Pancreas (tissue), 10 donors: ENCODE measurements at regions of chr17 and their contacts with region 1.

Region 1: DNA sequence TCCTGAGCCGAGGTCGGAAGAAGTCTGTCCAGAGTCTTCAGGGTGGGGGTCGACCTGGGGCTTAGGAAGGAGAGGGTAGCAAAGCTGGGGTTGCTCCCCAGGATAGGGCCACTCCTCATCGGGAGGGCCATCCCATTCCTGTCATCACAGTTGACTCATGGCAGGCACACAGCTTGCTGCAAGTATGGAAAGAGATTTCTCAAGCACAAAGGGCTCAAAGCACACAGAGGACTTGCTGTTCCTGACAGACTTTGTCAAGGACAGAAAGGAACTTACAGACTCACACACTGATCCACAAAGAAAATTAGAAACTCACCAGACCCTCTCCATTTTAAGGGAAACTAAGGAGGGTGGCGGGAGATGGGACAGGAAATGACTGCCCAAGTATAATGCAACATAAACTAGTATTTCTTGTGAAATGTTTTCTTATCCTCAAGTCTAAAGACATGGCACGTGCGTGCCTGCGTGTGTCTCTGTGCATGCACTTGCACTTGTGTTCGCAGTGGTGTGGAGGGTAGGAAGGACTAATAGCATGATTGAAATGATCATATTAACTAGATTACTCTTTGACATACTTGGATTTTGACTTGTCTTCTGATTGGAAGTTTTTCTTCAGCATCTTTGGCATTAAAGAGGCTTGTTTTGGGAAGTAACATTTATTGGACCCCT is 2.4 kb downstream of the AOC2 start:
- DNase-seq: no peak
- ATAC-seq: peak in 2 of 4 donors; percentile 8 to 15
- H3K4me3 ChIP-seq: no peak overlapping the region
- H3K27ac ChIP-seq: no peak overlapping the region
- H3K4me1 ChIP-seq: no peaks in the 10 kb centered on the region
- H3K27me3 ChIP-seq: no peaks in the 10 kb centered on the region
- CTCF ChIP-seq: no peak

Region 2: GRCh38 chr17:42928714-42929496 is 82.2 kb after region 1 on chr17:
- intact Hi-C with region 1: loop called in 1 of 3 experiments (anchors 5 kb)
- DNase-seq: peak in 4 of 6 donors; percentile 36 to 70 (median 58)
- ATAC-seq: peak; percentile 97 to 98 (median 98)
- H3K4me3 ChIP-seq: no peak overlapping the region
- H3K27ac ChIP-seq: peak overlapping the region in 3 of 4 donors; percentile 24 to 84 (median 81)
- H3K4me1 ChIP-seq: peaks cover 0 to 8% (median 0%) of the 10 kb centered on the region in 3 donors
- H3K27me3 ChIP-seq: no peaks in the 10 kb centered on the region
- CTCF ChIP-seq: peak; percentile 40 to 67 (median 57)

Region 3: GRCh38 chr17:42937712-42938596 is 91.2 kb after region 1 on chr17:
- intact Hi-C with region 1: loop called in 2 of 3 experiments (anchors 5 kb)
- DNase-seq: peak in 3 of 6 donors; percentile 24 to 57 (median 35)
- ATAC-seq: peak; percentile 60 to 94 (median 87)
- H3K4me3 ChIP-seq: no peak overlapping the region
- H3K27ac ChIP-seq: peak overlapping the region in 2 of 4 donors; percentile 33 to 37
- H3K4me1 ChIP-seq: no peaks in the 10 kb centered on the region
- H3K27me3 ChIP-seq: no peaks in the 10 kb centered on the region
- CTCF ChIP-seq: peak; percentile 12 to 43 (median 37)